HEK293 (cell line): ENCODE measurements at regions of chr2 and their contacts with region 1.

Region 1: GRCh38 chr2:119760237-119760955 is 674 bp downstream of the PTPN4 start:
- H3K4me3 ChIP-seq: peak overlapping the region; percentile 52
- H3K27ac ChIP-seq: peak overlapping the region; percentile 95
- H3K4me1 ChIP-seq: peaks cover 12% of the 10 kb centered on the region
- CTCF ChIP-seq: no peak

Region 2: GRCh38 chr2:120376679-120377640 is 616.6 kb after region 1 on chr2:
- CTCF ChIA-PET with region 1: no interaction called
- POLR2A ChIA-PET with region 1: interaction called, 11 read pairs
- H3K4me3 ChIP-seq: no peak overlapping the region
- H3K27ac ChIP-seq: no peak overlapping the region
- H3K4me1 ChIP-seq: no peaks in the 10 kb centered on the region
- CTCF ChIP-seq: no peak